ENCODE measurements at regions of chr14 and their contacts with region 1.

Region 1: DNA sequence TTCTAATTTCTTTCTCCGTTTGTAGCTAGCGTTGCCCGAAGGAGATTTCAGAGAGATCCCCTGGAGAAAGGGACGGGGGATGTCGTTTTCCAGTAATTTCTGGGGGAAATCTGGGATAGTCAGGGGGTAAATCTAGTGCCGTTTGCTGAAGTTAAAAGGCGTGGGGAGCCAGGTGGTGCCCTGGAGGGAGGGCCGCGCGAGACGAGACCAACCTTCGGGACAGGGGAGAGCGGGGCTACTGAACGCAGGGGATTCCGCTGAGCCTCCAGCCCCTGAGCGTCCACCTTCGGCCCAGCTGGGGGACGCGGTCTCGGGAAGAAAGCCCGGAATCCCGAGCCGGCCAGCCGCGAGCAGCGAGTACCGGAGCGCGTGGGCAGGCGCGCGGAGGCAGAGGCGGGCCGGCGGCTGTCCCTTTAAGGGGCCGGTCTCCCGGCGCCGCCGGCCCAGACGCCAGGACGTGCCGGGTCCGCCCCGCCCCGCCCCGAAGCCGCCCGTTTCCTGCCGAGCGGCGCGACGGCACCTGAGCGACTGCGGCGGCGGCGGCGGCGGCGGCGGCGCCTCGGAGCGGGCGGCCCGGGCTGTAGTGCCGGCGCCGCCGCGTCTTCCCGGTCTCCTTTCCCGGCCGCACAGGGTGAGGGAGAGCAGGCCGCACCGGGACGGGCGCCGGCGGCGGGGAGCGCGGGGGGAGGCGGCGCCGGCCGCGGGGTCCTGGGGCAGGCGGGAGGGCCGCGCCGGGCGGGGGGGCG is at the start of gene KTN1:
- DNase-seq: peak; percentile 61 to 85
- H3K4me3 ChIP-seq: peak within 1 kb of the TSS; percentile 85
- H3K27ac ChIP-seq: peak within 1 kb of the TSS; percentile 35
- H3K4me1 ChIP-seq: peaks cover 52% of the 10 kb centered on the region
- H3K27me3 ChIP-seq: no peaks in the 10 kb centered on the region
- CTCF ChIP-seq: no peak
- total RNA-seq, gene KTN1: 188 and 250 TPM in 2 replicates

Region 2: GRCh38 chr14:55240526-55241178 is 339.2 kb before region 1 on chr14:
- CTCF ChIA-PET with region 1: no interaction called
- POLR2A ChIA-PET with region 1: no interaction called
- intact Hi-C with region 1: no loop called
- DNase-seq: no peak
- H3K4me3 ChIP-seq: no peak overlapping the region
- H3K27ac ChIP-seq: no peak overlapping the region
- H3K4me1 ChIP-seq: peaks cover 9% of the 10 kb centered on the region
- H3K27me3 ChIP-seq: no peaks in the 10 kb centered on the region
- CTCF ChIP-seq: no peak

Region 3: GRCh38 chr14:55546212-55546874 is 33.6 kb before region 1 on chr14:
- CTCF ChIA-PET with region 1: no interaction called
- POLR2A ChIA-PET with region 1: interaction called, 27 read pairs
- intact Hi-C with region 1: no loop called
- DNase-seq: no peak
- H3K4me3 ChIP-seq: no peak overlapping the region
- H3K27ac ChIP-seq: no peak overlapping the region
- H3K4me1 ChIP-seq: peaks cover 19% of the 10 kb centered on the region
- H3K27me3 ChIP-seq: no peaks in the 10 kb centered on the region
- CTCF ChIP-seq: no peak

Region 4: DNA sequence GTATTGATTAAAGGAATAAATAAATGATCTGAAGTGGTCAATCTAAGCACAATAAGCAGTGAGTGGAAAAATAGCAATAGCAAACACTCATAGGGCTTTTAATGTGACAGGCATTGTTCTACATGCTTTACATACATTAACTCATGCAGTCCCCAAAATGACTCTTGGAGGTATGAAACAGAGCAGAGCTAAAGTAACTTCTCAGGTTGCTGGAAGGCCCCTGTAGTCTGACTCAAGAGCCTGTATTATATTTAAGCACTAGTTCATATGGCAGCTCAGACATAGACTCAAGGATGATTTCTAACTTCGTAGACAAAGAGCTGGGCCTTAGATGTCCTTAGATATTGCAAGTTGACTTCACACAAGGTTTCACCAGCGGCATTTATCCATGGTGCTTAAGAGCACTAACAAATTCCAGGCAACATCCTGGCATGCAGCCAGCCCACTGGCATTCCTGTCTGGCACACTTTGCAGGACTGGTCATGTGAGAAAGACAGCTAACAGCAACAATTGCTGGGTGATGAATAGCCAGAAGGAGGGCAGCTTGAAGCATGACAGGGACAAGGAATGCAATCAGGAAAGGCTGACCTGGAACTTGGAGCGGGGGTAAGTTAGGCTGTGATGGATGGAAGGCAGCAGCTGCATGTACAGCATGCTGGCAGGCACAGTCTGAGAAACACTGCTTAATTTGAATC is 22.8 kb before region 1 on chr14:
- CTCF ChIA-PET with region 1: interaction called, 3 read pairs
- POLR2A ChIA-PET with region 1: interaction called, 4 read pairs
- intact Hi-C with region 1: loop called (anchors 2 kb)
- DNase-seq: peak; percentile 90 to 91
- H3K4me3 ChIP-seq: no peak overlapping the region
- H3K27ac ChIP-seq: no peak overlapping the region
- H3K4me1 ChIP-seq: peaks cover 14% of the 10 kb centered on the region
- H3K27me3 ChIP-seq: no peaks in the 10 kb centered on the region
- CTCF ChIP-seq: no peak

Region 5: DNA sequence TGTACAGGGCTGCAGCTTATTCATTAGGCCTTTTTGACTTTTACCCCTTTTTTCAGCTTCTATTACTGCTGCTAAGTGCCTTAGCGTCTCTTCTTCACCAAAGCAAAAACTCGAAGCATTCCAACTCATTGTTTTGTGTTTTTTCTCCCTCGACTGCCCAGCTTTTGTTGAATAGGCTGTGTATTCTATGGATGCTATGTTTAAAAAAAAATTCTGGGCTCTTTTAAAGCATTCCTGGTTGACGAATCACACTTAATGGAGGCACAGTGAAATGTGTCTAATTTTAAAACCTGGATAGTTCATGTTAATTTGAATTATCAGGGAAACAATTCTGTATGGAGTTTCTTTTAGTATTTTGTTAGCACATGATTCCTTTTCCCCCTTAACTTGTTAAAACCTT is 29.8 kb after region 1 on chr14:
- CTCF ChIA-PET with region 1: no interaction called
- POLR2A ChIA-PET with region 1: interaction called, 11 read pairs
- intact Hi-C with region 1: no loop called
- DNase-seq: peak; percentile 7 to 49
- H3K4me3 ChIP-seq: no peak overlapping the region
- H3K27ac ChIP-seq: 0 out of 2 replicates have a peak overlapping the region, but pooled peaks have one; percentile 9
- H3K4me1 ChIP-seq: peaks cover 55% of the 10 kb centered on the region
- H3K27me3 ChIP-seq: no peaks in the 10 kb centered on the region
- CTCF ChIP-seq: no peak

Measured in PC-9 (cell line).